ENCODE measurements at regions of chr3 and their contacts with region 1.

Region 1: GRCh38 chr3:31213869-31214486 is 318.7 kb upstream of the STT3B start:
- DNase-seq: peak; percentile 49
- H3K4me3 Mint-ChIP-seq: no peak overlapping the region
- H3K27ac Mint-ChIP-seq: peak overlapping the region; percentile 3
- H3K4me1 Mint-ChIP-seq: peaks cover 88% of the 10 kb centered on the region
- H3K27me3 Mint-ChIP-seq: no peaks in the 10 kb centered on the region

Region 2: GRCh38 chr3:31077021-31077601 is 136.9 kb before region 1 on chr3:
- CTCF ChIA-PET with region 1: no interaction called
- intact Hi-C with region 1: loop called (anchors 1 kb)
- DNase-seq: peak; percentile 72
- H3K4me3 Mint-ChIP-seq: no peak overlapping the region
- H3K27ac Mint-ChIP-seq: peak overlapping the region; percentile 4
- H3K4me1 Mint-ChIP-seq: peaks cover 18% of the 10 kb centered on the region
- H3K27me3 Mint-ChIP-seq: no peaks in the 10 kb centered on the region

Region 3: DNA sequence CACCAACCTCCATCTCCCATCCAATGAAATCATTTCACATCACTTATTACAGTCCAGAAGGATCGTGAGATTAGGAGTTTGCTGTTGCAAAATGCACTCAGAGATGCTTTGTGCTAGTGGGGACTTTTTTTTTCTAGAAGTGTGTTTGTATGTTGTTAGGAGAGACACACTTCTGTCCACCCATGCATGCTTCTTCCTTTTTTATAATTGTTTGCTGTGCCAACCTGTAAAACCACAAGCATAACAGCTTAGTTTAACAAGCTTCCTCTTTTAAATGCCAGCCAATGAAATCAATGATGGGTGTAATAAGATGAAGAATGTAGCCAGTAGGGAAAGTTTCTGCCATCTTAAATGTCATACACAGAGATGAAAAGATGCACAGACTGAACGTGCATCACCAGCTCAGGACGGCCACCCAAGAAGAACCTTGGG is 13.2 kb after region 1 on chr3:
- CTCF ChIA-PET with region 1: interaction called, 5 read pairs
- intact Hi-C with region 1: loop called (anchors 1 kb)
- DNase-seq: no peak
- H3K4me3 Mint-ChIP-seq: no peak overlapping the region
- H3K27ac Mint-ChIP-seq: peak overlapping the region; percentile 64
- H3K4me1 Mint-ChIP-seq: peaks cover 87% of the 10 kb centered on the region
- H3K27me3 Mint-ChIP-seq: no peaks in the 10 kb centered on the region

Region 4: DNA sequence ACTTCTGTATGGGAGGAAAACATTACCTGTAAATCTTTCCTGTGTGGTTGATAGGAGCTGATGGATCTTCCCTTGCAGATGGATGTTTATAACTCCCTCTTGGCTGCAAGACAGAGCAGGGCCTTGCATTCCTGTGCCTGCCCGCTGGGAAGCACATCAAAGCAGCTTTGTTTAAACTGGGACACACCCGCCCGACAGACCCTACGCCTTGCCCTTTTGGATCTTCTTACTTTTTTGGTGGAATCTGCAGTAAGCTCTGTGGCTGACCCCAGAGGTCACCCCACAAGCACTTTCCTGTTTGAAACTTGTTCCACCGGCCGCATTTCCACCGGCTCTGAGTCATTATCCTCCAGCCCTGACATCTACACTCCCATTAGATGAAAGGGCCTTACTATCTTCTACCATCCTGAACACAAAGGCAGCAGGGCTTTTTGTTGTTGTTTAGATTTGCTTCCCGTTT is 74.7 kb after region 1 on chr3:
- CTCF ChIA-PET with region 1: no interaction called
- intact Hi-C with region 1: no loop called
- DNase-seq: peak; percentile 32
- H3K4me3 Mint-ChIP-seq: no peak overlapping the region
- H3K27ac Mint-ChIP-seq: no peak overlapping the region
- H3K4me1 Mint-ChIP-seq: peaks cover 11% of the 10 kb centered on the region
- H3K27me3 Mint-ChIP-seq: no peaks in the 10 kb centered on the region

Region 5: DNA sequence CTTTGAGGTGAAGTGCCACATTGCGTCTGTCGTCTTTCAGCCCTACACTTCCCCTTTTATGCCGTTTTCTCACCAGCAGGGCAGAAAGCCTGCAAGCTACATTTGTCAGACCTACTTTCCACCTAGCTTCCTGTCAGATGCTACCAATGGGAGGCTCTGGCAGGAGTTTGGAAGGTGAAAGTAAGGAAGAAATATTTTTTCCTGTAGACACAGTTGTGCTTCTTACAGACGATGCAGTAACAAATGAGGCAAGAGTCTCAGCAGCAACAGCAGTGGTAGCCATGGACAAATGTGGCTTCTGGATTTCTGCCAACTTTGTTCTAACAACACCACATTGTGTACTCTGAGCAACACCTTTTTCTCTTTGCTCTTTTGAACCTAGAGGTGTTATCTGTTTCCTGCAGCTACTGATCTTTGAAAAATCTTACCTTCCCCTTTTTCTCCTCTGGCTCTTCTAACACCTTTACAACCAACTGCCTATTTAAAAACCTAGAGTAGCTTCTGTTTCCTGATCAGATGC is 248.1 kb after region 1 on chr3:
- CTCF ChIA-PET with region 1: no interaction called
- intact Hi-C with region 1: loop called (anchors 5 kb)
- DNase-seq: peak; percentile 56
- H3K4me3 Mint-ChIP-seq: peak overlapping the region; percentile 35
- H3K27ac Mint-ChIP-seq: peak overlapping the region; percentile 70
- H3K4me1 Mint-ChIP-seq: peaks cover 51% of the 10 kb centered on the region
- H3K27me3 Mint-ChIP-seq: no peaks in the 10 kb centered on the region

Region 6: DNA sequence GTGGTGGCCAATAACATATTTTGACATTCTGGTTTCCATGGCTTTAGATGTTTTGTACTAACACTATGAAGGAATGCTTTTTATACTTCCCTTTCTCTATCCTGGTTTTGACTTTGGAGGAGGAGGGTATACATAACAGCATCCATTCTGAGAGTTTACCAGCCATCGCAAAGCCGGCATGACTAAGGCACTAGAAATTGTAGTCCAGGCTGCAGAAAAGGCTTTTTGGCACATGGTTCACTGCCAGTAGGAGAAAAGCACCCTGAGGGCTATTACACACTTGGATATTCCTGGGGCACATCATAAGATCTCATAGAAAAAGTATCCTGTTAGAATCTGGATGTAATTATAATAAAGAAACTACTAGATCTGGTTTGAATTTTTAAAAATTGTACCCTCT is 420.5 kb after region 1 on chr3:
- CTCF ChIA-PET with region 1: no interaction called
- intact Hi-C with region 1: loop called (anchors 5 kb)
- DNase-seq: no peak
- H3K4me3 Mint-ChIP-seq: no peak overlapping the region
- H3K27ac Mint-ChIP-seq: peak overlapping the region; percentile 24
- H3K4me1 Mint-ChIP-seq: peaks cover 41% of the 10 kb centered on the region
- H3K27me3 Mint-ChIP-seq: no peaks in the 10 kb centered on the region

Region 7: DNA sequence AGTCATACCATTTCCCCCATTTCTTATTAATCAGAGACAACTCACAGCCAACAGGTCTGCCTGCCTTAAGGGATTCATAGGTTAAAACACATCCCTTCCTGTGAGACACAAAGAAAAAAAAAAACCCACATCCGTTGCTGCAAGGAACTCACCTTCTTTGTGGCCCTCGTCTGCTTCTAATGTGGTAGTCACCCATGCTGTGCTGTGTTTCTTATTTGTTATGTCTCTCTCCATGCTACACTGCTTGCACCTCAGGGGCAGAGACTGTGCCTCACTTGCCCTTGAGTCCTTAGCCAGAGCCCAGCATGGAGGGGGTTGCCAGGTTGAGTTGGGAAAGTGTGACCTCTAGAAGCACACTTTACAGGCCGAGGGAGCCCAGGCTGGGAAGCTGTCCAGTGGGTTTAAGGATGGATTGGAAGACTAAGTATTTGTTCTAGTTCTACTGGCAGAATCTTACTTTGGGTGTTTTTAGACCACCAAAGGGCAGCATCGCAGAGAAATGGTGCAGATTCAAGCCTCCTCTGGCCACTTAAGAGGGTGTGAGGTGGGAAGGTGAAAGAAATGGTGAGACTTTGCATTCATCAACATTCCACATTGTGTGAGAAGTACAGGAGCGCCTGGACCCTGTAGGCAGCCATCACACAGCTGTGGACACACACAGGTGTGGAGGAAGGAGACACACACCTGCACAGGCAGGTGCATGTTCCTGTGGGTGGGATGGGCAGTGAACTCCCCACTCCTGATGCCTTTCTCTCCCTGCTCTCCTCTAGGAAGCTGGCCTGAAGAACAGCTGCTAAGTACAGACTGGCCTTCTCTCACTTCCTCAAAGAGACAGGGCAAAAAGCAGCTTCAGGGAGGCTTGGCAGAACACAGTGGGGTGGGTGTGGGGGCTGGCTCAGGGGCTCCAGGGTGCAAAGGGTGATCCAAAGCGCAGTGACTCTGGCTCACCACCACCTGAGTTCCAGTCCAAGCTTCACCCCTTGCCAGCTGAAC is 1834.2 kb after region 1 on chr3:
- CTCF ChIA-PET with region 1: no interaction called
- intact Hi-C with region 1: loop called (anchors 5 kb)
- DNase-seq: peak; percentile 78
- H3K4me3 Mint-ChIP-seq: no peak overlapping the region
- H3K27ac Mint-ChIP-seq: peak overlapping the region; percentile 89
- H3K4me1 Mint-ChIP-seq: peaks cover 62% of the 10 kb centered on the region
- H3K27me3 Mint-ChIP-seq: no peaks in the 10 kb centered on the region

Measured in activated naive CD4-positive, alpha-beta T cell treated with anti-CD3 and anti-CD28 coated beads for 36 hours (primary cell).